ENCODE measurements at regions of chr13 and their contacts with region 1.

Region 1: DNA sequence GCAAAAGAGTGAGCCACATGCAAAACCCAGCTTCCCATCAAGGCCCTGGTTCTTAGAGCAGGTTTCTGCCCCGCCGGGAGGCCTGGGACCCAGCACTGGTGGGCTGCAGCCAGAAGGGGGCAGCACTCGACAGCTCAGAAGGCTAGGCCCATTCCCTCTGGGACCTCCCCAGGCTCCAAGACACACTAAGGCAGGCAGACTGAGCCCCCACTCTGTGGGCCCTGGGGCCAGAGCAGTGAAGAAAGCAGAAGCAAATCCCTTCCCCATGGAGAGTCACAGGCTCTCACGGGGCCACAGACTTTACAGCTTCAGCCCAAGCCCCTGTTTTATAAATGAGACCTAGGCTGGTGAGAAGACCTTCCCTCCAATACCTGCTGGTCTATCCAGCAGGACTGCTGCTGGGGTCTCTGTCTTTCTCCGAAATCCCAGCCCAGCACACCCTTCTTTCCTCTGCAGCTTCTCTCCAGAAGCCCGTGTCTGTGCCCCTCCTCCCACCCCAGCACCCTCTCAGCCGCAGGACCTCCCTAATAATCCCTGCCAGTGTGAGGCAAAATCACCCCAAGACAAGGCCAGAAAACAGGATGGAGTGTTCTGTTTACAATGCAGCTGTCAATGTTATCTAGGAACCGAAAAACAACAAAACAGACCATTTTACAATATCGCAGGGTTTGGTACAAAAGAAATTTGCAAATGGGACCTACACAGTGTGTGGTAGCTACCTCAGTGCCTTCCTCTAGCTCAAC is 109.3 kb downstream of the ABCC4 start:
- DNase-seq: peak; percentile 74
- H3K4me3 ChIP-seq: no peak overlapping the region
- H3K27ac ChIP-seq: no peak overlapping the region
- H3K4me1 ChIP-seq: peaks cover 6% of the 10 kb centered on the region
- CTCF ChIP-seq: peak; percentile 82

Region 2: GRCh38 chr13:94860981-94861407 is 331.0 kb before region 1 on chr13:
- CTCF ChIA-PET with region 1: no interaction called
- POLR2A ChIA-PET with region 1: no interaction called
- intact Hi-C with region 1: no loop called
- DNase-seq: no peak
- H3K4me3 ChIP-seq: peak overlapping the region; percentile 15
- H3K27ac ChIP-seq: no peak overlapping the region
- H3K4me1 ChIP-seq: no peaks in the 10 kb centered on the region
- CTCF ChIP-seq: no peak

Region 3: DNA sequence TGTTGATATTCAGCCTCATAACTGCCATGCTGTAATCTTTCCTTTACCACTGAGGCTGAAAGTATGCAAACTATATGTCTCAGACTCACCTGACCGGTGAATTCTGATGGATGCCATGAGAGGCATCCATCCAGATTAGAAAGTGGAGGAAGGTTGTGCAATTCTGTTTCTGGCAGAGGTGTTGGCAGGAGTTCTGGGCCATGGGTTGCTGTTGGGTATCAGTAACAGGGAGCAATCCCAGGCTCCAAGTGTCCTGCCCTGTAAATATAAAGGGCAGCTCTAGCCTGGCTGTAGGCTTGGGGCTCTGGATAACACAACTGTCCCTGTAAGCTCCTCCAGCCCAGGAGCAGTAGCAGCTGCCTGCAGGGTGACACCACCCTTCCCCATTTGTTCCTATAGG is 186.6 kb after region 1 on chr13:
- CTCF ChIA-PET with region 1: interaction called, 4 read pairs
- POLR2A ChIA-PET with region 1: no interaction called
- intact Hi-C with region 1: loop called (anchors 1 kb)
- DNase-seq: no peak
- H3K4me3 ChIP-seq: no peak overlapping the region
- H3K27ac ChIP-seq: no peak overlapping the region
- H3K4me1 ChIP-seq: peaks cover 5% of the 10 kb centered on the region
- CTCF ChIP-seq: no peak

Region 4: DNA sequence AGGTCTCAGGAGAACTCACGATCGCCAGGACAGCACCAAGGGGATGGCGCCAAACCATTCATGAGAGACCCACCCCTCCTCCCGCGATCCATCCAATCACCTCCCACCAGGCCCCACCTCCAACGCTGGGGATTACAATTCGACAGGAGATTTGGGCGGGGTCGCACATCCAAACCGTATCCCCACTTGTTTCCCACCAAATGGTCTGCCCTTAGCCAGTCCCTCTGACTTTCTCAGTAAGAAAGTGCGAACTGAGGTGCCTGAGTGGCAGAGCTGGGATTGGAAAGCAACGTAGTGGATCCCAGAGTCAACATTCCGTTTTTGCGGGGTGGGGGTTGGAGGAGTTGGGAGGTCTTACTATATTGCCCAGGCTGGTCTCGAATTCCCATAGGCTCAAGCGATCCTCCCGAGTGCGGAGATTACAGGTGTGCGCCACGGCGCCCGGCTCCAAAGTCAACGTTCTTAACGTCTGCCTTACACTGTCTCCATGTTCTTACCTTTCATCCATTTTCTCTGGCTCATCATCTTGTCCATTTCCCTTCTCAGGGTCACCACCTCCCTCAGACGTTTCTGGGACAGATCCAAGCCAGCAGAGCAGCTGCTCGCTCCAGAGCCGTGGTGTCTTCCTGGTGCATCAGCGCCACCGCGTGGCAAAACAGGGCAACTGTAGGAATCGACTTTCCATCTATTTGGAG is 212.0 kb after region 1 on chr13:
- CTCF ChIA-PET with region 1: interaction called, 4 read pairs
- POLR2A ChIA-PET with region 1: no interaction called
- intact Hi-C with region 1: loop called (anchors 1 kb)
- DNase-seq: peak; percentile 63
- H3K4me3 ChIP-seq: no peak overlapping the region
- H3K27ac ChIP-seq: no peak overlapping the region
- H3K4me1 ChIP-seq: peaks cover 8% of the 10 kb centered on the region
- CTCF ChIP-seq: peak; percentile 82